Activated CD4-positive, alpha-beta memory T cell treated with anti-CD3 and anti-CD28 coated beads for 36 hours (primary cell): ENCODE measurements at regions of chr6 and their contacts with region 1.

Region 1: DNA sequence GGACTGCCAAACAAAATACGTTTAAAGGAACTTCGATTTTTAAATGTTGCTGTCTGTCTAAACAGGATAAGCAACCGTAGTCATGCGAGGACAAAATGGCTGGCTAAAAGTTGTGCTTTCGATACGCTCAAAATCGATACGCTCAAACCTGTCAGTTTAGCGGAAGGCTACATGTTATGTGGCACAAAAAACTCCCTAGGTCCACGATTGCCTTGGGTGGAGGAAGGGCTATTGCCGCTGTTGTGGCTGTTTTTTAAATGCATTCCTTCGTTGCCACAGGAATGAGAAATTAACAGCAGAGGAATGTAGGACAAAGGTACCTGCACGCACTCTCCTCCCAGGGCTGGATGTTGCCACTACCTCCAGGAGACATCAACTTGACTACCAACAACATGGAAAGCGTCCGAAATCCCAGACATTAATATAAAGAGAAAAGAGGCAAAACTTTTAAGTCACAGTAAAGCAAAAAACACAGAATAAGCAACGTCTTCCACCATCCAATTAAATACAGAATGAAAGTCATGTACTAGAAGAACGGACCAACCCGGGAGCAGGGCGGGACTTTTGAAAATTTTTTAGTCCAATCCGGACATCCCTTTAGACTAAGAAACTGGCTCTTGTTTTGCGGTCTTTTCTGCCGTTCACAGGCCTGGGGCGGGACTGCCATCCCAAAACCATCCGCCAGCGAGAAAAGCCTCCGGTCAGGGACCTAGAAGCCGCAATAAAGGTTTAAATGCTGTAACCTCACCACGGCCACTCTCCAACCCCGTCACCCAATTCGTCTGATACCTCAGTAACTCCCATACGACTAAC is 32.2 kb upstream of the HFE start:
- DNase-seq: peak; percentile 94
- H3K4me3 Mint-ChIP-seq: peak overlapping the region; percentile 93
- H3K27ac Mint-ChIP-seq: peak overlapping the region; percentile 98
- H3K4me1 Mint-ChIP-seq: peaks cover 22% of the 10 kb centered on the region
- H3K27me3 Mint-ChIP-seq: peaks cover 14% of the 10 kb centered on the region

Region 2: DNA sequence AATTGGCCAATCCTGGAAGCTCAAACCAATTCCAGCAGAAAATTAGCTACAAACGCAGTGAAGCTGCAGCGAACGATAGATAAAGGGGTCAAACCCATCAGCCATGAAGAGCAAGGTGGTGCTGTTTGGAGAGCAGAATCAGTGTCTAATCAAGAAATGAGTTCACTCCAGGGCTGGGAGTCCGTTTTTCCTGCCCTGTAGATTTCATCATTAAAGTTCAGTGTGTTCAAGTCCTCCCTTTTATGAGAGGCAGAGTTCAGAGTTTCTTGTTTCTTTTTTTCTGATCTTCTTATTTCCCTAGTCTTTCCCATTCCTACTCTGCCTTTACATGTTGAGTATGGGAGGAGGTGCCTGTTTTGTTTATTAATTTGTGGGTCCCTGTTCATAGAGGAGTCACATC is 253.6 kb before region 1 on chr6:
- CTCF ChIA-PET with region 1: no interaction called
- POLR2A ChIA-PET with region 1: no interaction called
- intact Hi-C with region 1: no loop called
- DNase-seq: no peak
- H3K4me3 Mint-ChIP-seq: no peak overlapping the region
- H3K27ac Mint-ChIP-seq: no peak overlapping the region
- H3K4me1 Mint-ChIP-seq: no peaks in the 10 kb centered on the region
- H3K27me3 Mint-ChIP-seq: peaks cover 24% of the 10 kb centered on the region

Region 3: DNA sequence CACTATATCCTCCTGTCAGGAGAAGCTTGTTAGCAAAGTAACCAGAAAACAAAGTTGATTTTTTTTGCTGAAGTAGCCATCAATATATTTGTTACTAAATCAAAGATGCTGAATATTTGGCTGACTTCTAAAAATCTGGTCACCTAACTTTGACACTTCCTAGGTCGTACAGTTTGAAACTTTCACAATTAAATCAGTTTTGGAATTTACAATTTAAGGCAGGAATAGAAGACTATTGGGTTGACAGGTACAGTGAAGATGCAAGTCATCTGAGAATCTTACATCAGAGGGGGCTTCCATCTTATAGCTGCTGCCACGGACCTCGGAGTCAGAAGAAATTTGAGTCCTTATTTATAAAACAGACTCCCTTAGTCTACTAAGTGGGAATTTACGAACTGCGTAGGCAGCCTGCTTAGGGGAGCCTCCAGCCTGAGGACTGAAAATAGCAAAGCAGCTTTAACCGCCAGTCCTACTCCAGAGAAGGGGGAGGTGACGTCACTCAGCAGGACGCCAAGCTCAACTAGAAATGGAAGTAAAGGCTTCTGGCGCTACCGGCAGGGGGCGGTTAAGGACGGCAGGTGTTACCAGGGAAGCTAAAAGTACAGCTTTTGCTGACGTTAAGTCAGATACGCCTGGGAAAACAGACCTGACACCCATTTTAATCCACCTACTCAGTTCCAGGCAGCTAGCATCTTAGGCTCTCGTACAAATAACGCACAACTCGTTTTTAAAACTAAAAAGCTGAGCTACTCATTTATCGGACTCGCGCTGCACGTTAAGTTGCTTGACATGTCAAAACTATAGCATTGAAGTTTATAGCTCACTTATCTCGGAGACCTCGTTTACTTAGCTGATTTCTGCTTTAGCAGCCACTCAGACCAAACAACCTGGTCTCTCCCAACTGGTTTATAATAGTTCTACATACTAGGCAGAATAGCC is 28.9 kb before region 1 on chr6:
- CTCF ChIA-PET with region 1: interaction called, 5 read pairs
- POLR2A ChIA-PET with region 1: interaction called, 72 read pairs
- intact Hi-C with region 1: loop called (anchors 1 kb)
- DNase-seq: peak; percentile 96
- H3K4me3 Mint-ChIP-seq: peak overlapping the region; percentile 87
- H3K27ac Mint-ChIP-seq: peak overlapping the region; percentile 91
- H3K4me1 Mint-ChIP-seq: peaks cover 53% of the 10 kb centered on the region
- H3K27me3 Mint-ChIP-seq: peaks cover 5% of the 10 kb centered on the region

Region 4: GRCh38 chr6:26097268-26097875 is 42.3 kb after region 1 on chr6:
- CTCF ChIA-PET with region 1: interaction called, 478 read pairs
- POLR2A ChIA-PET with region 1: interaction called, 21 read pairs
- intact Hi-C with region 1: loop called (anchors 2 kb)
- DNase-seq: peak; percentile 72
- H3K4me3 Mint-ChIP-seq: no peak overlapping the region
- H3K27ac Mint-ChIP-seq: no peak overlapping the region
- H3K4me1 Mint-ChIP-seq: peaks cover 4% of the 10 kb centered on the region
- H3K27me3 Mint-ChIP-seq: no peaks in the 10 kb centered on the region

Region 5: GRCh38 chr6:26183581-26184366 is 128.7 kb after region 1 on chr6:
- CTCF ChIA-PET with region 1: no interaction called
- POLR2A ChIA-PET with region 1: interaction called, 13 read pairs
- intact Hi-C with region 1: no loop called
- DNase-seq: peak; percentile 80
- H3K4me3 Mint-ChIP-seq: peak overlapping the region; percentile 85
- H3K27ac Mint-ChIP-seq: peak overlapping the region; percentile 95
- H3K4me1 Mint-ChIP-seq: peaks cover 37% of the 10 kb centered on the region
- H3K27me3 Mint-ChIP-seq: peaks cover under 1% of the 10 kb centered on the region

Region 6: DNA sequence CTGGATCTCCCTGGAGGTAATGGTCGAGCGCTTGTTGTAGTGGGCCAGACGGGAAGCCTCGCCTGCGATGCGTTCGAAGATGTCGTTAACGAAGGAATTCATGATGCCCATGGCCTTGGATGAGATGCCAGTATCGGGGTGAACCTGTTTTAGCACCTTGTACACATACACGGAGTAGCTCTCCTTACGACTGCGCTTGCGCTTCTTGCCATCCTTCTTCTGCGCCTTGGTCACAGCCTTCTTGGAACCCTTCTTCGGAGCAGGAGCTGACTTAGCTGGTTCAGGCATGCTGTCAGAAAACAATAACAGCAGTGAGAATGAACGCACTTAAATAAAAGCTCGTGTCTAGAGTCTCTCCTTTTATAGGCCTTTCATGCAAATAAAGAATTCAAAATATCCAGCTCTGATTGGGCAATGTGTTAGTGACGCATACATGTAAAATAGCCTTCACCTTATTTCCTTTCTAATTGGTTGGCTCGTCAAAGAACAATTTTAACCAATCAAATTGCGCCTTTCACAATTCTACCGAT is 161.4 kb after region 1 on chr6:
- CTCF ChIA-PET with region 1: no interaction called
- POLR2A ChIA-PET with region 1: interaction called, 9 read pairs
- intact Hi-C with region 1: loop called (anchors 5 kb)
- DNase-seq: peak; percentile 89
- H3K4me3 Mint-ChIP-seq: no peak overlapping the region
- H3K27ac Mint-ChIP-seq: no peak overlapping the region
- H3K4me1 Mint-ChIP-seq: peaks cover 5% of the 10 kb centered on the region
- H3K27me3 Mint-ChIP-seq: no peaks in the 10 kb centered on the region